HepG2 (cell line): ENCODE measurements at regions of chr9 and their contacts with region 1.

Region 1: DNA sequence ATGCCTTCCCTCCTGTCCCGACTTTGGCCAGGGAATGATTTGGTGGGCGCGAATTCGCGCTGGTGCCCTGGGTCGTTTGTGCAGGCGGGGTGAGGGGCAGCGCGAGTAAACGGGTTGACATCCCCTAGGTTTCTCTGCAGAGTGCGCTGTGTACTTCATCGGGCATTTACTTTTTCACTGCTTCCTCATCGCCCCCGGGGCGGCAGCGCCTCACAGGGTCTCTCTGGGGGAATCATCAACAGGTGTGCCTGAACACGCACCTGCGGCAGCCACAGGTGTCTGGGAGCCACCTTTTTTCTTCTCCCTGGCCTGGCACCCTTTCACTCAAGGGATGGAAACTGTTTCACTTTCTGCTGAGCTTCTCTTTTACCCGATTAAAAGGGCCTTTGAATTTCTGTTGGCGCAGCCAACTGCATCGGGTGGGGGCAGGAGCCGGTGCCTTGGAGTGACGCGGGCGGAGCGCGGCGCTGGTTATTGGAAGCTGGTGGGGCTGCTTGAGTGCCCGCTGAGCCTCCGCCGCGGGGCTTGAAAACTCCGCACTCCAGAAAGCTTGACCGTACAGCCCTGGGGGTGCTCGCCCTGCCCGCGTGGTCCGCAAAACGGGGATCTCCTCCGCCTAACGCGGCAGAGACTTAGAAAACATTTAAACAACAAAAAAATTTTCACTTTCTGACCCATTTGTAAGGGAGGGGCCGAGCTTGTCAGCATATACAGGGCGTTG is 52.1 kb upstream of the TJP2 start:
- DNase-seq: peak; percentile 29
- ATAC-seq: peak; percentile 49
- H3K4me3 ChIP-seq: peak overlapping the region; percentile 75 to 92 (median 91)
- H3K27ac ChIP-seq: peak overlapping the region; percentile 99
- H3K4me1 ChIP-seq: peaks cover 29% of the 10 kb centered on the region
- H3K27me3 ChIP-seq: no peaks in the 10 kb centered on the region; a peak in 1 of 5 replicates
- CTCF ChIP-seq: no peak; the same call in 1 of the 2 replicates
- EP300 ChIP-seq: no peak
- POLR2A ChIP-seq: peak in 1 of 2 experiments; percentile 32; a peak in 1 of 4 replicates
- RAD21 ChIP-seq: no peak

Region 2: GRCh38 chr9:69085569-69086283 is 36.3 kb before region 1 on chr9:
- CTCF ChIA-PET with region 1: no interaction called
- POLR2A ChIA-PET with region 1: interaction called, 4 read pairs
- in situ Hi-C with region 1: no loop called
- intact Hi-C with region 1: loop called (anchors 2 kb)
- DNase-seq: peak; percentile 53
- ATAC-seq: peak; percentile 81
- H3K4me3 ChIP-seq: peak overlapping the region in 2 of 3 experiments; percentile 26 to 38; a peak in 2 of 6 replicates
- H3K27ac ChIP-seq: peak overlapping the region; percentile 32
- H3K4me1 ChIP-seq: peaks cover 26% of the 10 kb centered on the region
- H3K27me3 ChIP-seq: no peaks in the 10 kb centered on the region
- CTCF ChIP-seq: no peak
- EP300 ChIP-seq: no peak
- POLR2A ChIP-seq: no peak
- RAD21 ChIP-seq: no peak

Region 3: GRCh38 chr9:69157751-69158466 is 35.9 kb after region 1 on chr9:
- CTCF ChIA-PET with region 1: no interaction called
- POLR2A ChIA-PET with region 1: interaction called, 19 read pairs
- in situ Hi-C with region 1: no loop called
- intact Hi-C with region 1: no loop called
- DNase-seq: no peak
- ATAC-seq: no peak
- H3K4me3 ChIP-seq: no peak overlapping the region
- H3K27ac ChIP-seq: no peak overlapping the region
- H3K4me1 ChIP-seq: peaks cover 30% of the 10 kb centered on the region
- H3K27me3 ChIP-seq: no peaks in the 10 kb centered on the region
- CTCF ChIP-seq: peak; percentile 55
- EP300 ChIP-seq: no peak
- POLR2A ChIP-seq: no peak
- RAD21 ChIP-seq: no peak

Region 4: DNA sequence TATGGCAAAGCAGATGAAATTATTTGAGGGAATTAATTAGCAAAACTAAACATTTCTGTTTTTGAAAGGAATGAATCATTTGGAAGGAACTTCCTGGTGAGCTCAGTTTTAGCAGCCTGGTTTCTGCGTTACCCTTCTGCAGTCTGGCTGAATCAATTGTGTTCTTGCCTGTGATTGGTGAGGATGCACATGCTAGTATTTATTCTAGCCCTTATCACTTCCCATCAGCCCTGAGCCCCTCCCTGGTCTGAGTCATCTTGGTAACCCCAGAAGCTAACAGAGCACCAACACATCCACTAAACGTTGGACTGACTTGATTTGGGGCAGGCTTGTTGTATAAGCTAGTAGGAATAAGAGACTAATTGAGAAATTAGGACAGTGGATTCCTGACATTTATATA is 58.7 kb after region 1 on chr9:
- CTCF ChIA-PET with region 1: no interaction called
- POLR2A ChIA-PET with region 1: interaction called, 16 read pairs
- in situ Hi-C with region 1: no loop called
- intact Hi-C with region 1: no loop called
- DNase-seq: peak; percentile 93
- ATAC-seq: peak; percentile 84
- H3K4me3 ChIP-seq: no peak overlapping the region
- H3K27ac ChIP-seq: peak overlapping the region; percentile 53
- H3K4me1 ChIP-seq: peaks cover 99% of the 10 kb centered on the region
- H3K27me3 ChIP-seq: no peaks in the 10 kb centered on the region
- CTCF ChIP-seq: no peak
- EP300 ChIP-seq: peak in 1 of 2 experiments; percentile 71; a peak in 2 of 4 replicates
- POLR2A ChIP-seq: no peak
- RAD21 ChIP-seq: no peak

Region 5: DNA sequence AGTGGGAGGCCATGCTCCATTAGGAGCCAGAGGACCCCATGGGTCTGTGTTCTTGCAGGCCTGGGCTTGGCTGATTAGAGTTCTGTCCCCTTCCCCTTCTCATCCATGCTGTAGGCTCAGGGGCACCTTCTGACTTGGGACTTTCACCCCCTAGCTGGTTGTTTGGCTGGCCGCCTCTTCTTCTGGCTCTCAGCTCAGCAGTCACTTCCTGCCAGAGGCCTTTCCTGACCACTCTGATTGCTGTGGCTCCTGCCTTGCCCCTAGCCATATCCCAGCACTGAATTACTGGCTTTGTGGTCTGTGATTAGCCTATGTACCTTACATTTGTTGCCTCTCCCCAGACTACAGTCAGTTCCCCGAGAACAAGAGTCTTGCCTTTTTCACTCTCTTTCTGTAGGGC is 217.6 kb after region 1 on chr9:
- CTCF ChIA-PET with region 1: no interaction called
- POLR2A ChIA-PET with region 1: no interaction called
- in situ Hi-C with region 1: no loop called
- intact Hi-C with region 1: no loop called
- DNase-seq: no peak
- ATAC-seq: no peak
- H3K4me3 ChIP-seq: no peak overlapping the region
- H3K27ac ChIP-seq: no peak overlapping the region
- H3K4me1 ChIP-seq: no peaks in the 10 kb centered on the region
- H3K27me3 ChIP-seq: no peaks in the 10 kb centered on the region
- CTCF ChIP-seq: no peak
- EP300 ChIP-seq: no peak
- POLR2A ChIP-seq: no peak
- RAD21 ChIP-seq: no peak